Dendritic cell treated with granulocyte-macrophage colony-stimulating factor and Interleukin-4, amounts not matched to agents 40 ng/mL and 50 ng/mL, for 4 days (primary cell): ENCODE measurements at regions of chr16 and their contacts with region 1.

Region 1: GRCh38 chr16:72664509-72665225 is 383.3 kb downstream of the ZFHX3 start:
- H3K4me3 Mint-ChIP-seq: peak overlapping the region; percentile 99
- H3K27ac Mint-ChIP-seq: peak overlapping the region; percentile 89
- H3K4me1 Mint-ChIP-seq: peaks cover 6% of the 10 kb centered on the region
- H3K27me3 Mint-ChIP-seq: no peaks in the 10 kb centered on the region

Region 2: GRCh38 chr16:72787514-72788268 is 123.0 kb after region 1 on chr16:
- intact Hi-C with region 1: loop called (anchors 10 kb)
- H3K4me3 Mint-ChIP-seq: peak overlapping the region; percentile 77
- H3K27ac Mint-ChIP-seq: peak overlapping the region; percentile 89
- H3K4me1 Mint-ChIP-seq: peaks cover 40% of the 10 kb centered on the region
- H3K27me3 Mint-ChIP-seq: no peaks in the 10 kb centered on the region

Region 3: DNA sequence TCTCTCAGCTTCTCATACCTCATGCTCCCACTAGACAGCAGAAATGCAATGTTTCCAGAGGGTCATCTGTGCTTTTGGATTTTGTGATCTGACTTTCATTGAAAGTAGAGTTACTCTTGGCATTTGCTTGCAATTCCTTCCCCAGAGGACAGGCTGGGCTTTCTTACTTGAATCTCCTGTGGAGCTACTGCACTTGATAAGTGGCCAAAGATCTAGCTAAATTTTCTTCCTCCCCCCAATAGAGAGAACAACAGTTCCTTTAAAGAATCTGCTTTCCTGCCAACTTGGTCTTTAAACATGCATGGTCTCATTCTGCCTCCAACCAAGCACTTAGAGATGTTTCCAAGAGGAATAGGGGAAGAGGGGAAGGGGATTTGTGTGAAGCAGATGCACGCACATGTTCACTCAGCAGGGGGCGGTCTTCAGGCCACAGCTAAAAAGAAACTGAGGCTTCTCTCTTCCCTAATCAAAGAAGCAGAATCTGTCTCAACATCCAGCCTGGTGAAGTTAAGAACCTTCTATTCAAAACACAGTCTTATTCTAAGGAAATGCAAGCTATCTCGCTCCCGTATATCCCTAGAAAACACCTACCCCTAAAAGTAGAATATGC is 153.7 kb after region 1 on chr16:
- intact Hi-C with region 1: no loop called
- H3K4me3 Mint-ChIP-seq: no peak overlapping the region
- H3K27ac Mint-ChIP-seq: no peak overlapping the region
- H3K4me1 Mint-ChIP-seq: peaks cover 11% of the 10 kb centered on the region
- H3K27me3 Mint-ChIP-seq: no peaks in the 10 kb centered on the region

Region 4: GRCh38 chr16:73058221-73058615 is 393.6 kb after region 1 on chr16:
- intact Hi-C with region 1: loop called (anchors 10 kb)
- H3K4me3 Mint-ChIP-seq: peak overlapping the region; percentile 90
- H3K27ac Mint-ChIP-seq: peak overlapping the region; percentile 92
- H3K4me1 Mint-ChIP-seq: peaks cover 57% of the 10 kb centered on the region
- H3K27me3 Mint-ChIP-seq: peaks cover 40% of the 10 kb centered on the region

Region 5: DNA sequence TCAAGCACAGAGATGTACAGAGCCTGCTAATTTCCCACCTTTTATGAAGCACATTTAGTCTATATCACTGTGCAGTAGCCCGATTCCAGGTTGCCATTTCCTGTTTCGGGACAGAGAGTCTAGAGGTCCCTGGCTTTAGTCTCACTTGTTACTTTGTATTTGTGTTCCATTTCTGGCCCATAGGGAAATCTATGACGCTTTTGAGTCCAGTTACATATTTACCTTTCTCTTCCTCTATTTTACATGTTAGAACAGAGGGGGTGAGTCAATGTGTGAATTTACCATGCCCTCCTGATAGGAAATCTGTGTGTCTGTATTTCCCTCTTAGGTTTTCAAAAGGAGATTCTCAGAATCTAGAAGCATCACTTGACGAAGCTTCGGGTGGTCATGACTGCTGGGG is 610.4 kb after region 1 on chr16:
- intact Hi-C with region 1: no loop called
- H3K4me3 Mint-ChIP-seq: no peak overlapping the region
- H3K27ac Mint-ChIP-seq: no peak overlapping the region
- H3K4me1 Mint-ChIP-seq: no peaks in the 10 kb centered on the region
- H3K27me3 Mint-ChIP-seq: no peaks in the 10 kb centered on the region